Tibial artery (tissue), 4 donors: ENCODE measurements at regions of chr2 and their contacts with region 1.

Region 1: GRCh38 chr2:24827321-24828237 is 34.4 kb downstream of the CENPO start:
- DNase-seq: peak; percentile 82 to 86
- H3K4me3 ChIP-seq: no peak overlapping the region
- H3K27ac ChIP-seq: no peak overlapping the region
- H3K4me1 ChIP-seq: peaks cover 0 to 9% (median 3%) of the 10 kb centered on the region in 4 donors
- H3K27me3 ChIP-seq: no peaks in the 10 kb centered on the region
- CTCF ChIP-seq: peak; percentile 84 to 91

Region 2: GRCh38 chr2:22970284-22970975 is 1857.1 kb before region 1 on chr2:
- intact Hi-C with region 1: no loop called
- DNase-seq: no peak
- H3K4me3 ChIP-seq: no peak overlapping the region
- H3K27ac ChIP-seq: no peak overlapping the region
- H3K4me1 ChIP-seq: no peaks in the 10 kb centered on the region
- H3K27me3 ChIP-seq: no peaks in the 10 kb centered on the region
- CTCF ChIP-seq: no peak

Region 3: GRCh38 chr2:24409700-24410556 is 417.7 kb before region 1 on chr2:
- intact Hi-C with region 1: loop called (anchors 2 kb)
- DNase-seq: peak in 1 of 2 donors; percentile 37
- H3K4me3 ChIP-seq: no peak overlapping the region
- H3K27ac ChIP-seq: no peak overlapping the region
- H3K4me1 ChIP-seq: no peaks in the 10 kb centered on the region
- H3K27me3 ChIP-seq: peaks cover 0 to 18% of the 10 kb centered on the region in 2 donors
- CTCF ChIP-seq: peak; percentile 82 to 83

Region 4: DNA sequence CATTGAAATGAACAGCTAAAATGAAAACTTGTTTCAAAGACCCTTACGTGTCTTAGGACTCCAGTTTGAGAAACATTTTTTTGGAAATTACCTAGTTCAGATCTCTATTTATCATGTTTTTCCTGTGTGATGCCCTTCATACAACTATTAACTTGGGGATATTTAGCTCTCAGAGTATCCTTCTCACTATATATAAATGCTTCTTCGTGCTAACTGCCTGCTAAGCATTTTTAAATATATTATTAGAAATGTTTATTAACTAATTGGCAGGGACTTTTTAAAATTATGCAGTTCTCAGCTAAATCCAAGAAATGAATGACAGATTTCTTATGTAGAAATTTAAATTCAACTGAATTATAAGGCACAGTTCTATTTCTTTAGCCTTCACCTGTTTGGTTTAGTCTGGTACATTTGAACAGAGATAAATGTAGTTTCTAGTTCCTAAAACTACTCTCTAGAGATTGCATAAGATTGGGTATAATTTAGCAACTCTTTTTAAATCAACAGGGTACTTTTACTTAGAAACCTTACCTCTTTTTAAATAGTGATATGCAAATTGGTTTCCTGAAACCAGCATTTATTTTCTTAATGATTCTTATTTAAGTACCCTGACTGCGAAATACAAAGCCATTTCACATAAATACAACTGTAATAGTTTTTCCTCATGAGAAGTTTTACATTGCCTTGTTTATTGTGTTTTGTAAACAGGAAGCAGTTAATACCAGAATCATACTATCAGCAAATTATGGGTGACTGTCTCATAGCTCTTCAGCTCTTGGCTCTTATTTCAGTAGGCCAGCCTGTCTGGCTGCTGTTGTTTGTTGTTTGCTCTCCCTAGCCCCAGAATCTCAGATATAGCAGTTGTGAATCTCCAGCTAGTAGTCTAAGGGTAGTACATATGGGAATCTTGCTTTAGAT is 175.1 kb before region 1 on chr2:
- intact Hi-C with region 1: no loop called
- DNase-seq: no peak
- H3K4me3 ChIP-seq: no peak overlapping the region
- H3K27ac ChIP-seq: no peak overlapping the region
- H3K4me1 ChIP-seq: no peaks in the 10 kb centered on the region
- H3K27me3 ChIP-seq: no peaks in the 10 kb centered on the region
- CTCF ChIP-seq: no peak